Posterior vena cava (tissue), 2 donors: ENCODE measurements at regions of chr14 and their contacts with region 1.

Region 1: DNA sequence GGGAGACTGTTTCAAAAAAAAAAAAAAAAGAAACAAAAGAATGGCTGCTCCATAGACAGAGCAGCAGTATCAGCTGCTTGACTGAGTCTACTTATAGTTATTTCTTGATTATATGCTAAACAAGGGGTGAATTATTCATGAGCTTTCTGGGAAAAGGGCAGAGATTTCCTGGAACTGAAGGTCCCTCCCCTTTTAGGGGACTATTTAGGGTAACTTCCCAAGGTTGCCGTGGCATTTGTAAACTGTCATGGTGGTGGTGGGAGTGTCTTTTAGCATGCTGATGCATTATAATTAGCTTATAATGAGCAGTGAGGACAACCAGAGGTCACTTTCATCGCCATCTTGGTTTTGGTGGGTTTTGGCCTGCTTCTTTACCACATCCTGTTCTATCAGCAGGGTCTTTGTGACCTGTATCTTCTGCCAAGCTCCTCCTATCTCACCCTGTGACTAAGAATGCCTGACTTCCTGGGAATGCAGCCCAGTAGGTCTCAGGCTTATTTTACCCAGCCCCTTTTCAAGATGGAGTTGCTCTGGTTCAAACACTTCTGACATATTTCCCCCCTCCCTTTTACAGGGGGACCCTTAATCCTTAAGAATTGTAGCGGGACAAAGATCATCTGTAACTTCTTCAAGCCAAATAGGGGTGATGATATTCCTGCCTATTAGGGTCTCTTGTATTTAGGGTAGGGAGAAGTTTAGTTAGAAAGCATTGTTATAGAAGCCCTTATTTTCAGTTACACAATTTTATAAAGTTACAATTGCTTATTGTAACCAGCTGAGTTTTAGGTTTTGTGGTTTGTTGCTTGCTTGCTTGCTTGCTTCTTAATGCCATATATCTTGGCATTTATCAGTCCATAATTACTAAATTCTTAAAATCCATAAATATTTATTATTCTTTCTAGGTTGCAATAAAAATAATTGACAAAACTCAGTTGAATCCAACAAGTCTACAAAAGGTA is 42.5 kb downstream of the MARK3 start:
- DNase-seq: no peak

Region 2: DNA sequence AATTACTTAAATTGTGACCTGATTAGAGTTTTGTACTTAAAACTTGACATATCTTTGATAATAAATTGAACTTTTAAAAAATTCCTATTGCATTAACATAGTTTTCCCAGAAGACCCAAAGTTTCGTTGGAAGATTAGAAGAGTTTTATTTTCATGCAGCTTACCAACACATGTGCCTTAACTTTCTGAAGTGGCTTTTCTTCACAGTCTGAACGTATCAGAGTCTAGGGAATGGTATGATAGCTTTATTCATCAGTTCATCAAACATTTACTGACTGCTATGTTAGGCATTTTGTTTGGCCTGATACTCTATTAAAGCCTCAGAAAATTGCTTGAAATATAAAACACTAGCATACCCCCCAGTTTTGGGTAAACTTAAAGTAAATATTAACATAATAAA is 22.7 kb after region 1 on chr14:
- intact Hi-C with region 1: loop called in 1 of 2 experiments (anchors 1 kb)
- DNase-seq: no peak

Region 3: GRCh38 chr14:103679351-103679750 is 251.6 kb after region 1 on chr14:
- intact Hi-C with region 1: no loop called
- DNase-seq: peak; percentile 87